H1 (cell line): ENCODE measurements at regions of chr10 and their contacts with region 1.

Region 1: DNA sequence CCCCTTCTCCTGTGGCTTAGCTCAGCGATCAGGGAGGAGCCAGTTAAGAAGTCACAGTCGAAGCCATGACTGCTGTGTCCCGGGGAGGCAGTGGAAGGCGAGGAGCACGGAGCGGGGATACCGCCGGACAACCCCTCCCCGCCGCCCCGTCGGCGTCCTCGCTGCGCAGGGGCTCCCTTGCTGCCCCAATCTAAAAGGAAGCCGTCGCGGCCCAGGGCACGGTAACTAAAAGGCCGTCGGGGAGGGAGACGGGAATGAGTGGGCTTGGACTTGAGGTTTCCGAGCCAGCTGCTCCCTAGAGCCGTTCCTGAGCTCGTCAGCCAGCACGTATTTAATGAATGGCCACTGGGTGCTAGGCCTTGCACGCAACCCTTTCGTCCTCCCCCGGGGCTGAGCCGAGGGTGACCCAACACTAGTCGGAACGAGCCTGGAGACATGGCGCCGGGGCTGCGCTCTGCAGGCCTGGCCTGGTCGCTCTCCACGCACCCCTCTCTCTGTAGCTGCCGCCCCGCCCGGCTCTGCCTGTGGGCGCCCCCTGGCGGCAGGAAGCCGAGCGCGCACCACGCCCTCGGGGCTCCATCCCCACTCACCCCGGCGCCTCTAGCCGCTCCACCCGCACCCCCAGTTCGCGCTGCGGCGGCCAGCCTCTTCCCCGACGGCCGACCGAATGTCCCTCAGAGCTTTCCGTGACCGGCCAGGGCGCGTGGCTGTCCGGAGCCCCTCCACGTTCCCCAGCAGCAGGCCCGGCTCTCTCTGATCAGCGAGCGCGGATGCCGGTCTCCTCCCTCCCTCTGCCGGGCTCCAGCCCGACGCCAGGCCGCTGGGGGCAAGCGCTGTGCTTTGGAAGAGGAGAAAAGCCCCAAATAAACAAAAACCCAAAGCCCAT is 29.3 kb upstream of the KCNK18 start:
- DNase-seq: peak in 1 of 2 experiments; percentile 96
- H3K4me3 ChIP-seq: peak overlapping the region; percentile 32 to 69 (median 42)
- H3K27ac ChIP-seq: no peak overlapping the region
- H3K4me1 ChIP-seq: peaks cover 0 to 23% (median 7%) of the 10 kb centered on the region in 4 experiments; a peak in 6 of 7 replicates
- H3K27me3 ChIP-seq: peaks cover 76 to 98% (median 92%) of the 10 kb centered on the region in 4 experiments
- CTCF ChIP-seq: peak; percentile 71 to 88 (median 81)
- EP300 ChIP-seq: no peak
- POLR2A ChIP-seq: no peak
- RAD21 ChIP-seq: peak; percentile 52 to 61; a peak in 3 of 4 replicates

Region 2: DNA sequence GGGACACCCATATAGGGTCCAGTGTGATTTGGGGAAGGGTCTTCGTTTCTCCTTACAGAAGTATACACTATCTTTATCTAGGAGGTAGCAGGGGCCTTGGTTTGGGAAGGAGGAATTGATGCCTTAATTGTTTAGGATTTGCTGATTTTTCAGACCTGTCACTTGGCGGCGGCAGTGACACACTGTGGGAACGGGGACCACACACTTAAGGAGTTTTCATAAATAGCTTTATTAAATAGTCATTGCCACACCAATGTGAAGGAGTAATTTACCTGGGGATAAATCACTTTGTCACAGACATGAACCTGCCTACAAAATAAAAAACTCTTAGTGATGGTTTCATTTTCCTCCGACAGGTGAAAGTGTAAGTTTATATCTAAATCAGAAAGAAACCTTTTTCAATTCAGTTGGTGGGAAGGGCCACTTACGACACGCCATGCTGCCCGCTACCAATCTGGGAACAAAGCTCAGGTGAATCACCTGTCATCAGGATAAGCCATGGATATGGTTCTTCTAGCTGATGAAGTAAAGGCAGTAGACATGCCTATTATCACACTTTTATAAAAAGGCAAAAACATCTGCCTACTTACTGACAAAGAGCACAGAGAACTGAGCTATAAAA is 331.0 kb before region 1 on chr10:
- CTCF ChIA-PET with region 1: interaction called, 21 read pairs
- POLR2A ChIA-PET with region 1: interaction called, 6 read pairs
- DNase-seq: no peak
- H3K4me3 ChIP-seq: no peak overlapping the region
- H3K27ac ChIP-seq: no peak overlapping the region
- H3K4me1 ChIP-seq: peaks cover 29 to 50% (median 41%) of the 10 kb centered on the region in 4 experiments
- H3K27me3 ChIP-seq: no peaks in the 10 kb centered on the region
- CTCF ChIP-seq: peak in 2 of 3 experiments; percentile 12 to 22; a peak in 2 of 4 replicates
- EP300 ChIP-seq: no peak
- POLR2A ChIP-seq: no peak
- RAD21 ChIP-seq: peak; percentile 54 to 61

Region 3: DNA sequence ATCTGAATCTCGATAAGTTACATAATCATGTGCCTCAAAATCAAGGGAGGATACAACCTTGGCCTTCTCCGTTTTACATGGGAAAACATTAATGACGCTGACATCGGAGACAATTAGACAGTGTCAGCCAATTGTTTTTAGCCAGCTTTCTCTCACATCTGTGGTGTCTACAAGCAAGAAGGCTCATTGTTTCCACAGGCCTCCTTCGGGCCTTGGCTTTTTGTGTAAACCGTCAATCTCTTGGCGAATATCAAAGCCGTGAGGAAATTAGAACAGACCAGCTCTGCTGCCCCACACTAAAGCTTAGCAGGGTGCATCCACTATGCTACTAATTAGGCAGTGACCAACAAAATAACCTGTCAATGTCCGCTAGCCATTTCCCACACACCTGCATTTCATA is 73.2 kb before region 1 on chr10:
- CTCF ChIA-PET with region 1: interaction called, 16 read pairs
- POLR2A ChIA-PET with region 1: no interaction called
- DNase-seq: no peak
- H3K4me3 ChIP-seq: no peak overlapping the region
- H3K27ac ChIP-seq: no peak overlapping the region
- H3K4me1 ChIP-seq: peaks cover 0 to 7% (median 4%) of the 10 kb centered on the region in 4 experiments; a peak in 3 of 7 replicates
- H3K27me3 ChIP-seq: no peaks in the 10 kb centered on the region
- CTCF ChIP-seq: no peak
- EP300 ChIP-seq: no peak
- POLR2A ChIP-seq: no peak
- RAD21 ChIP-seq: no peak

Region 4: GRCh38 chr10:117131376-117132327 is 36.4 kb before region 1 on chr10:
- CTCF ChIA-PET with region 1: interaction called, 212 read pairs
- POLR2A ChIA-PET with region 1: interaction called, 24 read pairs
- DNase-seq: peak in 1 of 2 experiments; percentile 62
- H3K4me3 ChIP-seq: peak overlapping the region in 3 of 4 experiments; percentile 24 to 50 (median 27); a peak in 7 of 8 replicates
- H3K27ac ChIP-seq: no peak overlapping the region
- H3K4me1 ChIP-seq: peaks cover 3 to 24% (median 12%) of the 10 kb centered on the region in 4 experiments
- H3K27me3 ChIP-seq: peaks cover 72 to 98% (median 92%) of the 10 kb centered on the region in 4 experiments
- CTCF ChIP-seq: no peak
- EP300 ChIP-seq: no peak
- POLR2A ChIP-seq: no peak
- RAD21 ChIP-seq: no peak